ENCODE measurements at regions of chr7 and their contacts with region 1.

Region 1: DNA sequence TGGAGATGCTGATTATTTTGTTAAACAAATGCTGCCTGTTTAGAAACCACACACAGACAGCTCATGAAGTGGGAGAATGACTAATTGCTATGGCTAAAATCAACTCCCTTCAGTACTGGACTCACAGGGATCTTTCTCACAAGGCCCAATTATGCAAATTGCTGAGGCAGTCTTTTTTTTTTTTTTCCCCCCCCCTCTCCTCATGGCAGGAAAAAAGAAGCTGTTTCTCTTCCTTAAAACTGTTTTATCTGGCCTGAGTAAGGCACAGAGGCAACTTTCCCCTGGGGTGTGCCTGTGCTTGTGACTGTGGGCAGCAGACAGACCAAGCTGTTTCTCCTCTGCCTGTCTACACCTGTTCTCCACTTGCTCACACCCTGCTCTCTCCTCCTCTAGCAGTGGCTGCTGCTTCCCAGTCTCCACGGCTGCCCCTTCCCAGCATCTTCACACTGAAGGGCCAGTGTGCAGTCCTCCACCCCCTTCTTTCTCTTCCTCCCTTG is 65.4 kb upstream of the STEAP1B start:
- DNase-seq: peak; percentile 60
- ATAC-seq: peak; percentile 16
- H3K4me3 ChIP-seq: peak overlapping the region; percentile 14; the same call in 1 of the 2 replicates
- H3K27ac ChIP-seq: peak overlapping the region; percentile 95
- H3K4me1 ChIP-seq: peaks cover 76% of the 10 kb centered on the region
- H3K27me3 ChIP-seq: no peaks in the 10 kb centered on the region
- CTCF ChIP-seq: no peak

Region 2: DNA sequence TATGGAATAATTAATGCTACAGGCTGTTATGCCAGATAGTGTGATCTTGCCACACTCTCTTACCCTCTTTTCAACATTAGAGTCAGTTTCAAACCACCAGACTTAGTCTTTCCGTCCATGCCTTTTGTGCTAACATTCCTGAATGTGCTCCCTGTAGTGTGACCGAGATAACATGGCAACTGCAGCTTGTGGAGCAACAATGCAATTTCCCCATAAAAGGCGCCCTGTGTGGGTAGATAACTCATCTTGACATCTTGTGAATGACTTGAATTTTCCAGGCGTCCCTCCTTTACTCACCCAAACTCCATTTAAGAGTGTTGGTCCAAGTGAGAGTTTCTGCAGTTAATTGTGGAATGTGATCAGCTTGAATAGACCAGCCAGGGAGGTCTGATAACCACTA is 922.9 kb before region 1 on chr7:
- CTCF ChIA-PET with region 1: no interaction called
- POLR2A ChIA-PET with region 1: no interaction called
- intact Hi-C with region 1: no loop called
- DNase-seq: no peak
- ATAC-seq: no peak
- H3K4me3 ChIP-seq: no peak overlapping the region
- H3K27ac ChIP-seq: no peak overlapping the region
- H3K4me1 ChIP-seq: peaks cover 30% of the 10 kb centered on the region
- H3K27me3 ChIP-seq: peaks cover 55% of the 10 kb centered on the region
- CTCF ChIP-seq: no peak

Region 3: DNA sequence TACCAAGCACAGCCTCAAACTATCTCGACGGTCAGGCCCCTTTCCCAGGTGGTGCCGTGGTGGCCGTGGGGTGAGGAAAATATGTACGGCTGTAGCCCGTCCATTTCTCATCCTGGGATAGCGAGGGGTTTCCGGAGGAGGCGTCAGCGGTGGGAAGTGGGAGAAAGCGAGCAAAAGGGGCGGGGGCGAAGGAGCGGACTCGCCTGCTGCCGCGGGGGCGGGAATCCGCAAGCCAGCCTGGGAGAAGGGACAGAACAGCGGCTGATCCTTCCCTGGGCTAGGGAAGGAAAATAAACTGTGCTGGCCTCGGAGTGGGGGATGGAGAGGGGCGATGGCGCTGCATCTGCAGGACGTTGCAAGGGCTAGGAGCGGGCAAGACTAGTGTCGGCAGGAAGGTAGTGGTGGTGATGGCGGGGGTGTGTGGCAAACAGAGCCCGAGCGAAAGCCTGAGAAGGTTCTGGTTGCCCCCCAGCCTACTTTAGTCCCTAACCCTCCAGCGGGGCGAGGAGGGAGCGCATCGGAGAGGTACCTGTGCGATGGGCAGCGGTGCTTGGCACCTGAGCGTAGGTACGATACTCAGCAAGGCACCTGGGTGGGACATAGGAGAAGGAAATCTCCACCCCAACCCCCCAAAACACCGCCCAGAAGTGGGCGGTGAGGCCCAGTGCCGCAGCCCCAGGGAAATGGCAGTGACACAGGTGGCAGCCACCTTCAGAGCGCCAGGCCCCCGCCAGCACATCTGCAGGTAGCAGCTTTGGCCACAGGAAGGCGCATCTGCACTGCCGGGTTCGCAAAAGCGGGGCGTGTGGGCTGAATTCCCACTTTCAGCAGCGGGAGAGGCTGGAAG is 15.5 kb before region 1 on chr7:
- CTCF ChIA-PET with region 1: interaction called, 10 read pairs
- POLR2A ChIA-PET with region 1: no interaction called
- intact Hi-C with region 1: no loop called
- DNase-seq: peak; percentile 64
- ATAC-seq: peak; percentile 84
- H3K4me3 ChIP-seq: no peak overlapping the region
- H3K27ac ChIP-seq: no peak overlapping the region
- H3K4me1 ChIP-seq: no peaks in the 10 kb centered on the region
- H3K27me3 ChIP-seq: peaks cover 12% of the 10 kb centered on the region; the same call in 1 of the 2 replicates
- CTCF ChIP-seq: peak; percentile 85

Region 4: DNA sequence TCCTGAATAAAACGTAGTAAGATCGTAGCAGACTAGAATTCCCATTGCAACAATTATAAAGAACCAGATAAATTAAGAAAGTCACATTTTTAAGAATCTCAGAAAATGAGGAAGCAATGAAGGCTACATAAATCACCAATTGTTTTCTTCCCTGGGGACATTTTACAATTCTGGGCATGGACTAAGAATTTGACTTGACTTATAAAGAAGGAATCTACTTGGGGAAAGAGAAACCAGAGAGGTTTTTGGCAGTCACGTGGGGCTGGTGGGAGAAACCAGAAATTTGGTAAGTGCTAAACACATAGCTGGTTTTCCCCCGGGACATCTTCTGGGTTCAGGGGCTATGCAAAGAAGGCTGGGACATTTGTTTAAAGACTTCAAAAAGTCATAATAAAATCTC is 51.8 kb after region 1 on chr7:
- CTCF ChIA-PET with region 1: no interaction called
- POLR2A ChIA-PET with region 1: no interaction called
- intact Hi-C with region 1: no loop called
- DNase-seq: no peak
- ATAC-seq: no peak
- H3K4me3 ChIP-seq: no peak overlapping the region
- H3K27ac ChIP-seq: no peak overlapping the region
- H3K4me1 ChIP-seq: no peaks in the 10 kb centered on the region
- H3K27me3 ChIP-seq: no peaks in the 10 kb centered on the region
- CTCF ChIP-seq: no peak

Region 5: DNA sequence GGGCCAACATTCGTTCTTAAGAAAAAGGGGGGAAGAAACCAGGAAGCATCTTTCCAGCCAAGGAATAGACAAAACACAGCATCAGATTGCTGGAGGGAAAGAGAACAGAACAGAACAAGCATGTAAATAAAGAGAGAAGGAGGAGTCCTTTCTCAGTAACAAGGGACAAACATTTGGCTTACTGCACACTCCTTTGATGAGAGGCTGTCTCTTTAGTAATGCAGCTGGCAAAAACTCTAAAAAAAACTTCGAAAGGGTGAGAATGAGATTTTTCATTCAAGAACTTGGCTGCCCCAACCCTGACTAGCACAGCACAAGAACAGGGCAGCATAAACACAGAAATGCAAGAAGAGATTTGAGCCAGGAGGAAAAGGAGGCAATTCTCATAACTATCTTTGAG is 122.7 kb after region 1 on chr7:
- CTCF ChIA-PET with region 1: no interaction called
- POLR2A ChIA-PET with region 1: no interaction called
- intact Hi-C with region 1: no loop called
- DNase-seq: no peak
- ATAC-seq: no peak
- H3K4me3 ChIP-seq: no peak overlapping the region
- H3K27ac ChIP-seq: no peak overlapping the region
- H3K4me1 ChIP-seq: no peaks in the 10 kb centered on the region
- H3K27me3 ChIP-seq: no peaks in the 10 kb centered on the region
- CTCF ChIP-seq: no peak

Measured in PC-3 (cell line).